CD4-positive, alpha-beta T cell (primary cell): ENCODE measurements at regions of chr20 and their contacts with region 1.

Region 1: GRCh38 chr20:49148601-49149000 is 39.5 kb downstream of the STAU1 start:
- DNase-seq: no peak
- ATAC-seq: no peak
- H3K4me3 ChIP-seq: no peak overlapping the region
- H3K4me3 Mint-ChIP-seq: no peak overlapping the region
- H3K27ac ChIP-seq: no peak overlapping the region
- H3K27ac Mint-ChIP-seq: peak overlapping the region; percentile 68
- H3K4me1 ChIP-seq: no peaks in the 10 kb centered on the region
- H3K4me1 Mint-ChIP-seq: peaks cover 25% of the 10 kb centered on the region
- H3K27me3 ChIP-seq: no peaks in the 10 kb centered on the region
- H3K27me3 Mint-ChIP-seq: no peaks in the 10 kb centered on the region
- CTCF ChIP-seq: no peak

Region 2: DNA sequence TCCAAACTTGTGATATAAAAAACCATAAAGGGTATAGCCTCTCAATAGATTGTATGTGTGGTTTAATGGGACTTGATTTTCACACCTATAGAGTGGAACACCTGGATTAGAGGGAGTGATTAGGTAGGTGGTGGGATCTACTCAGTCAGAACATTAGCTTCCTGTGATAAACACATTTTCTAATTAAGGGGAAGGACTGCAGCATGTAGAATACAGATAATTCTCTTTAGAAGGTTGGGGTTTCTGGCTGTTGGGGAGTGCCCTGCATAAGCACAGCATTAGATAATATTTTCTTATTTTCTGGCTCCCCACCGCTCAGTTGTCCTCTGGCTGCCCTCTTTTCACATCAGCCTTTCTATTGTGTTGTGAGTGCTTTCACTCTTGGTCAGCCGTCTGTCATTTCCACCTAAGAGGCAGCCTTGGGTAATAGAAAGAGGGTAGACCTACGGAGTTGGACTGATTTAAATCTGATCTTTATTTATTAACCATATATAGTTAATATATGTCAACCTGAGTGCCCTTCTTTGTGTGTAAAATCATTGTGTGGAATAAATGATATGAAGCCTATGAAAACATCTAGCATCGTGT is 94.5 kb before region 1 on chr20:
- CTCF ChIA-PET with region 1: no interaction called
- POLR2A ChIA-PET with region 1: no interaction called
- intact Hi-C with region 1: no loop called
- DNase-seq: no peak
- ATAC-seq: no peak
- H3K4me3 ChIP-seq: no peak overlapping the region
- H3K4me3 Mint-ChIP-seq: no peak overlapping the region
- H3K27ac ChIP-seq: no peak overlapping the region
- H3K27ac Mint-ChIP-seq: no peak overlapping the region
- H3K4me1 ChIP-seq: peaks cover 44% of the 10 kb centered on the region
- H3K4me1 Mint-ChIP-seq: peaks cover 50% of the 10 kb centered on the region
- H3K27me3 ChIP-seq: no peaks in the 10 kb centered on the region
- H3K27me3 Mint-ChIP-seq: no peaks in the 10 kb centered on the region
- CTCF ChIP-seq: no peak

Region 3: DNA sequence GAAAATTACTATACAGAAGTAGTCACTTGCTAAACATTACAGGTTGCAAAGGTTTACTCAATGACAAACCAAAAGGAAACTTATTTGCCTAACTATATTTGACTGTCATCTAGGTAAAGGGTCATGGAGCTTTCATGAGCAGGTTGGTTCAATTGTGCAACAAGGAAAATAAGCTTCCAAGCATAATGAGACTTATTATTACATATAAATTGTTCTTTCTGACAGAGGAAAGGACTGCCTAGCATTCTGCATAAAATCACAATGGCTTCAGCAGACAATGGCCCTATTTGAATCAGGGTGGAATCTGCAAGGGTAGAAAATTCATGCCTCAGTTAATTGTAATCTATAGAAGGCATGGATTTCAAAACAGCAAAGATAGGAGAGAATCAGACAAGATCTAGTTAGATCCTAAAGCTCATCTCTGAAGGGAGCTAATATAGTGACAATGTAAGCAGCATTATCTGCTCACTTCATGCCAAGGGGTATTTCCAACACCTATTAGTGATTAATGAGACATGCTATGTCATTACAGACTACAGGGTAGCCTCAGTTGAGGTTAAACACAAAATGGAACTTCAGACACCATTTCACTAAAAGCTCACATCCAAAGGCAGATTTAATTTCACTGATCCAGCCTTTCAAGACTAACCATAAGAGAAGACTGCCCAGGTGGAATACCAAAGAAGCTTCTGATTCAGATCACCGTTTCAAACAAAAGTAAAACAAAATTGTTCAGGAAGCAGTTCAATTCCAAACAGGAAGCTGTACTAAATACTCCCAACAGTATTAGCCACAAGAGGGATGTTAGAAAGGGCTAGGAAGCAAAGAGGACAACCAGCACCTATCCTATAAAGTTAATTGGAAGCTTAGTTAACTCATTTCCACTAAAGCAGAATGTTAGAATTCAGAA is 31.0 kb after region 1 on chr20:
- CTCF ChIA-PET with region 1: no interaction called
- POLR2A ChIA-PET with region 1: interaction called, 4 read pairs
- intact Hi-C with region 1: loop called in 1 of 2 experiments (anchors 5 kb)
- DNase-seq: no peak
- ATAC-seq: no peak
- H3K4me3 ChIP-seq: no peak overlapping the region
- H3K4me3 Mint-ChIP-seq: peak overlapping the region; percentile 20
- H3K27ac ChIP-seq: no peak overlapping the region
- H3K27ac Mint-ChIP-seq: peak overlapping the region; percentile 21
- H3K4me1 ChIP-seq: peaks cover 30% of the 10 kb centered on the region
- H3K4me1 Mint-ChIP-seq: peaks cover 65% of the 10 kb centered on the region
- H3K27me3 ChIP-seq: no peaks in the 10 kb centered on the region
- H3K27me3 Mint-ChIP-seq: no peaks in the 10 kb centered on the region
- CTCF ChIP-seq: no peak